Endothelial cell of umbilical vein (primary cell): ENCODE measurements at regions of chr7 and their contacts with region 1.

Region 1: DNA sequence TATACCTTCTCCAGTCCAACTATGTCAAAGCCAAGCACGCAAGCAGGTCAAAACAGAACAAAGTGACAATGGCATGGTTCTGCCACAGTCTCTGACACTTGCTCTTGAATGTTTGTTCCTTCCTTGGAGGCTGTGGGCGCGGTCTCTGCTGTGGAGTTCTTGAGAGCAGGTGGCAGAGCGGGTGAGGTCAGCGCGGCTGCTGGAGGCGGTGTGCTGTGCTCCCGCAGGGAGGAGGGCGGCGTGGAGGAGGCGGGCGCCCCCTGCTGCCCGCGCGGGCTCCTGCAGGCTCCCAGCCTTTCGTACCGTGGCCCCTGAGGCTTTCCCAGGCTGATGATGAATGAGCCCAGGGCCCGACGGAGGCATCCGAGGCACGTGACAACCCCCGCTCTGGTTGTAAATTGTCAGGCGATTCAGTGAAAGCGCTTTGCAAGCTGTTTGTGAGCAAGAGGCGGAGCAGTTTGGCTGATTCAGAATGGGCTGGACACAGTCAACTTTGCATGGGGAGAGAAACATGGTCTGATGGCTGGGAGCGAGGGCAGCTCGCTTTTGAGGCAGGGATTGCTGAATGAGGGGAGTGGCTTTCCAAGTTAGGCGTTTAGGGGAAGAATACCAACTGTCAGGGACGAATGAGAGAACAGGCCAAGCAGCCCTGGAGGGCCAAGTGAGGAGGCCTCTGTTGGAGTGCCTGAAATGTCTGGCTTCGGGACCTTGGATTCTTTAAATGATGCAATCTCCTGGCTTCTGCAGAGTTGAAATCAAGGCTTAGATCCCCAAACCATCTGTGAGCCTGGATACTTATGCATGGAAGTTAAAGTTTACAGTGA is 46.6 kb downstream of the CDHR3 start:
- DNase-seq: peak; percentile 84
- H3K4me3 ChIP-seq: no peak overlapping the region
- H3K27ac ChIP-seq: no peak overlapping the region
- H3K4me1 ChIP-seq: peaks cover 2% of the 10 kb centered on the region
- H3K27me3 ChIP-seq: peaks cover 15 to 25% of the 10 kb centered on the region in 2 experiments
- CTCF ChIP-seq: peak; percentile 99
- POLR2A ChIP-seq: no peak

Region 2: GRCh38 chr7:105652359-105652993 is 357.1 kb before region 1 on chr7:
- CTCF ChIA-PET with region 1: interaction called, 6 read pairs
- POLR2A ChIA-PET with region 1: no interaction called
- dilution Hi-C with region 1: no loop called
- intact Hi-C with region 1: loop called (anchors 1 kb)
- DNase-seq: peak; percentile 67
- H3K4me3 ChIP-seq: no peak overlapping the region
- H3K27ac ChIP-seq: no peak overlapping the region
- H3K4me1 ChIP-seq: no peaks in the 10 kb centered on the region
- H3K27me3 ChIP-seq: no peaks in the 10 kb centered on the region
- CTCF ChIP-seq: peak; percentile 74 to 91
- POLR2A ChIP-seq: no peak

Region 3: DNA sequence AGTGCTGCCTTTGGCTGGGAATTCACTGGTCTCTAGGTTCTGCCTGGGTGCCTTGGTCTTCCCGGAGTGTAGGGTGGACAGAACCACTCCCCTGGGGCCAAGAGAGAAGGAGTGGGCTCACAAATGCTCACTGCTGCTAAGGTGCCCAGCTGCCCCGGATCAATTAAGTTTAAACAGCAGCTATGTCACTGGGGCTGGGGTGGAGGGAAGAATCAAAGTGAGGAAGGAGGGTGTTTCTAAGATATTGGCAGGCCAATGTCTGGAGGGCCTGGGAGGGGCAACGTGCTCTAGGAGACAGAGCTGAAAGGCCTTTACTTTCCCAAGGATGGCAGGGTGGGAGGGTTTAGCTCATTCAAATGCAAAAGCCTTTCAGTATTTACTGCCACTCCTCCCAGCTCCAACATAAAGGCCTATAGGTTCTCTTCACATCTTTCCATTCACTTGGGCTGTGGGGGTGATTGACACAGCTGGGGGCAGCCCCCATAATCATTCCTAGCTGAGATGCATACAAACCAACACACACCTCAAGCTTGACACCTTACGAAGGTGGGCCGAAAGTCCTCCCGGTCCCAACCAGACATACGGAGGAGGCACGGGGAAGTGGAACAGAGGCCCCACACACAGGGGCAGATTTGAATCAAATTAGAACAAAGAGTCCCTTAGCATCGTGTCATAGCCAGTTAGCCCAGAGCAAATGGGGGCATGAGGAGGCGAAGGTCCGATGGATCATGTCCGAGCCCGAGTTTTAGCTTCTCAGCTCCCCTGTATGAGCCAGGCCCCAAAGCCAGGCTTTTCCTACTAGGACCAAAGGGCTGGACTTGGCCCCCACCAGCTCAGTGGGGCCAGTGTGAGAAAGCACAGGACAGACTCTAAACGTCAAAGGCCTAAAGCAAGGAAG is 320.3 kb before region 1 on chr7:
- CTCF ChIA-PET with region 1: no interaction called
- POLR2A ChIA-PET with region 1: no interaction called
- dilution Hi-C with region 1: no loop called
- intact Hi-C with region 1: loop called (anchors 1 kb)
- DNase-seq: no peak
- H3K4me3 ChIP-seq: no peak overlapping the region
- H3K27ac ChIP-seq: no peak overlapping the region
- H3K4me1 ChIP-seq: peaks cover 6% of the 10 kb centered on the region
- H3K27me3 ChIP-seq: no peaks in the 10 kb centered on the region
- CTCF ChIP-seq: no peak
- POLR2A ChIP-seq: no peak

Region 4: DNA sequence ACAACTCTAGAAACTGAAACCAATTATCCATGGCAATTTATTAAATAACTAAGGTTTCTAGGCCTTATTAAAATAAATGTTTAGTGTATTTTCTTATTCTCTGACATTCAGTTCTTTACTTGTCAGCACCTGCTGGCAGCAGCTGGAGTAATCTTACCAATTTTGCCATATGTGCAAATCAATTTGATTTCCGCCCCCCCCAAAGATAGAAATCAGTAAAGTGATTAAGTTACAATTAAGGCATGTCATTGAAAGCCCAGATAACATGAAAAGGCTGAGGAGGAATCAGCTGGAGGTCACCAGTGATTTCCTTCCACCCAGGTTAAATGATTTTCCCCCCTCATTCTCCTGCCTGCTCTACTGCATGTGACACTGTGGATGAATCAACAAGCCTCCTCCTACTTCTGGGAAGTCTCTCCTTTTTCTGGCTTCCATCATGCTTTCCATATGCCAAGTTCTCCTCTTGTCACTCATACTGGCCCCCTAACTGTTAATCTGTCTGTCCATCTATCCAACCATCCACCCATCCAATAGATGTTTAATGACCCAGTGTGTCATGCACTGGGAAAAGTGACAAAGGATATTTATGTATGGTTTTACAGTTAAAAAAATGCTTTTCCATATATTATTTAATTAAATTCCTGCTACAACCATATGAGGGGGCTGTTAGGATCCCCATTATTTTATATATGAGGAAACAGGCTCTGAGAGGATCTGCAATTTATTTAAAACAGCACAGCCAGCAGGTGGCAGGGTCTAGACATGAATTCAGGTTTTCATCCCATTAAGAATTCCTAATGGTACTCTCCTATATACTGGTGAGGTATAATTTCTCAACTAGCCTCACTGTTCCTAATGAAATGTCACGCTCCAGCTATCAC is 249.7 kb before region 1 on chr7:
- CTCF ChIA-PET with region 1: interaction called, 66 read pairs
- POLR2A ChIA-PET with region 1: no interaction called
- dilution Hi-C with region 1: loop called (anchors 25 kb)
- intact Hi-C with region 1: loop called (anchors 1 kb)
- DNase-seq: peak; percentile 64
- H3K4me3 ChIP-seq: no peak overlapping the region
- H3K27ac ChIP-seq: no peak overlapping the region
- H3K4me1 ChIP-seq: no peaks in the 10 kb centered on the region
- H3K27me3 ChIP-seq: no peaks in the 10 kb centered on the region
- CTCF ChIP-seq: peak; percentile 33 to 43
- POLR2A ChIP-seq: no peak

Region 5: DNA sequence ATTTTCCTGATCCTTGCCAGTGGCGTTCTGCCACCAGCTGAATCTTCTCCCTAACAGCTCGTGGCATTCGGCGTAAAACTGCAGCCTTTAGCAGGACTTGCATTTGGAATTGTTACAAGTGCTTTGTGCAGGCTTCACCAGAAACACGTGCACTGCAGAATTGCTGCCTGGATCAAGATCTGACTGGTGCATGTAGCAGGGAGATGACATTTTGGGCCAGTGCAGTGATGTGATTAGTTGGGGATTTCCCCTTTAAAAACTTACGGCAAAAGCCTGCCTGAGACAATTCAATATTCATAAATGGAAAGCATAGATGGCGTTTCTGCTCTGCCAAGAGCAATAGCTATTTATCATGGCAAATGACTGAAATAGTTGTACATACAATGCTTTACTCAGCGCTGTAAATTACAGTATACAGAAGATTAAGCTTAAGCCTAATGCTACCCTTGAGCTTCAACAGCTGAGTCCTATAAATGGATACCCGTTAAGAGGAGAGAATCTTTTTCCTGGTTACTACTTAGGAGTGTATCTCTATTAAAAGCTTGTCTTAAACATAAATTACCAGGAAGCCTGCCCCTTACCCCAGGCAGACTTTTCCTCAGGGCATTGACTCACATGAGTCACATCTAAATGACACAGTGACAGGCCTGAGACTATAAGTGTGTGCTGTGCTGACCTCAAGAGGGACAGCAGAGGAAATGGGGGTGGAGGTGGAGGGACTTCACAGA is 239.6 kb before region 1 on chr7:
- CTCF ChIA-PET with region 1: interaction called, 23 read pairs
- POLR2A ChIA-PET with region 1: no interaction called
- dilution Hi-C with region 1: loop called (anchors 25 kb)
- intact Hi-C with region 1: loop called (anchors 1 kb)
- DNase-seq: peak; percentile 16
- H3K4me3 ChIP-seq: no peak overlapping the region
- H3K27ac ChIP-seq: no peak overlapping the region
- H3K4me1 ChIP-seq: peaks cover 7% of the 10 kb centered on the region
- H3K27me3 ChIP-seq: no peaks in the 10 kb centered on the region
- CTCF ChIP-seq: no peak
- POLR2A ChIP-seq: no peak

Region 6: GRCh38 chr7:106679153-106679931 is 669.7 kb after region 1 on chr7:
- CTCF ChIA-PET with region 1: no interaction called
- POLR2A ChIA-PET with region 1: no interaction called
- dilution Hi-C with region 1: no loop called
- intact Hi-C with region 1: no loop called
- DNase-seq: peak; percentile 73
- H3K4me3 ChIP-seq: no peak overlapping the region
- H3K27ac ChIP-seq: peak overlapping the region; percentile 47
- H3K4me1 ChIP-seq: peaks cover 22% of the 10 kb centered on the region
- H3K27me3 ChIP-seq: no peaks in the 10 kb centered on the region
- CTCF ChIP-seq: no peak
- POLR2A ChIP-seq: no peak